ENCODE measurements at regions of chr13 and their contacts with region 1.

Region 1: GRCh38 chr13:32905063-32905863 is 111.0 kb upstream of the KL start:
- DNase-seq: no peak
- H3K4me3 Mint-ChIP-seq: peak overlapping the region; percentile 69
- H3K27ac Mint-ChIP-seq: peak overlapping the region; percentile 83
- H3K4me1 Mint-ChIP-seq: peaks cover 32% of the 10 kb centered on the region
- H3K27me3 Mint-ChIP-seq: peaks cover 4% of the 10 kb centered on the region

Region 2: GRCh38 chr13:31930901-31931522 is 974.3 kb before region 1 on chr13:
- intact Hi-C with region 1: loop called (anchors 5 kb)
- DNase-seq: peak; percentile 48
- H3K4me3 Mint-ChIP-seq: no peak overlapping the region
- H3K27ac Mint-ChIP-seq: no peak overlapping the region
- H3K4me1 Mint-ChIP-seq: peaks cover 17% of the 10 kb centered on the region
- H3K27me3 Mint-ChIP-seq: peaks cover 4% of the 10 kb centered on the region

Region 3: GRCh38 chr13:32586080-32586900 is 319.0 kb before region 1 on chr13 and contains the start of gene PDS5B:
- intact Hi-C with region 1: loop called (anchors 1 kb)
- DNase-seq: peak; percentile 93
- H3K4me3 Mint-ChIP-seq: peak within 1 kb of the TSS; percentile 95
- H3K27ac Mint-ChIP-seq: peak within 1 kb of the TSS; percentile 96
- H3K4me1 Mint-ChIP-seq: peaks cover 45% of the 10 kb centered on the region
- H3K27me3 Mint-ChIP-seq: peaks cover 16% of the 10 kb centered on the region
- total RNA-seq, gene PDS5B: 57.8 and 62.7 TPM in 2 replicates

Region 4: GRCh38 chr13:32838945-32839344 is 66.3 kb before region 1 on chr13:
- intact Hi-C with region 1: loop called (anchors 2 kb)
- DNase-seq: peak; percentile 14
- H3K4me3 Mint-ChIP-seq: no peak overlapping the region
- H3K27ac Mint-ChIP-seq: no peak overlapping the region
- H3K4me1 Mint-ChIP-seq: peaks cover 20% of the 10 kb centered on the region
- H3K27me3 Mint-ChIP-seq: no peaks in the 10 kb centered on the region

Region 5: DNA sequence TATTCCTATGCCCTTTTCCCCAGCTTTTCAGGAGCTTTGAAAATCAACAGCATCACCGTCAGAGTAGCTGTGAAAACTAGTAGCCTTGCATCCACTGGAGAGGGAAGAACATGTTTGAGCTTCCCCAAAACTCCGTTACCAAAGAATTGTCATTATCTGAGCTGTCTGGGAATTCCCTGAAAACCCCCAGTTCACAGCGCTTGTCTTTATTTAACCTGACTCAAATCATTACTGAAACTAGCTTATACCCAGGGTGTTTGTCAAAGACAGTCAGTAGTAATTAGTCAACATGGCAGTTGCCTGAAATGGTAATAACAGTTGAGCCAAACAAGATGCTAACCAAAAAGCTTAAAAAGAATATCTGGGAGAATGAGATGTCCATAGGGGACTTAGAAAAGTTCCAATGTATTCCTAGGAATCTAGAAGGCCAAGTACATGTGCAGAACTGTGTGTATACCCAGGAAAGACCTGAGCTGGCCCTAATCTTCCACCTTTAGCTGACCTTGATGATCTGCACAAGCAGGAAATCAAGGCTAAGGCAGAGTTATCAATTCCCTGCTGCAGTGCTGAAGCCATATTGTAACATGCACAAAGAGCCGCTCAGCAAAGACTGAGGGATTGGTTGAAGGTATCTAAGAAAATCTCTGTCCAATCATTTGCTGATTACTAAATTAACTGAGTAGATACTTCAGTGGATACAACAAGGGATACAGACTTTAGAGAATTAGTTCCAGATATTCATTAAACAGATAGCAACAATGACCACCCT is 241.8 kb after region 1 on chr13:
- intact Hi-C with region 1: loop called (anchors 5 kb)
- DNase-seq: peak; percentile 25
- H3K4me3 Mint-ChIP-seq: peak overlapping the region; percentile 20
- H3K27ac Mint-ChIP-seq: peak overlapping the region; percentile 81
- H3K4me1 Mint-ChIP-seq: peaks cover 41% of the 10 kb centered on the region
- H3K27me3 Mint-ChIP-seq: no peaks in the 10 kb centered on the region

Region 6: DNA sequence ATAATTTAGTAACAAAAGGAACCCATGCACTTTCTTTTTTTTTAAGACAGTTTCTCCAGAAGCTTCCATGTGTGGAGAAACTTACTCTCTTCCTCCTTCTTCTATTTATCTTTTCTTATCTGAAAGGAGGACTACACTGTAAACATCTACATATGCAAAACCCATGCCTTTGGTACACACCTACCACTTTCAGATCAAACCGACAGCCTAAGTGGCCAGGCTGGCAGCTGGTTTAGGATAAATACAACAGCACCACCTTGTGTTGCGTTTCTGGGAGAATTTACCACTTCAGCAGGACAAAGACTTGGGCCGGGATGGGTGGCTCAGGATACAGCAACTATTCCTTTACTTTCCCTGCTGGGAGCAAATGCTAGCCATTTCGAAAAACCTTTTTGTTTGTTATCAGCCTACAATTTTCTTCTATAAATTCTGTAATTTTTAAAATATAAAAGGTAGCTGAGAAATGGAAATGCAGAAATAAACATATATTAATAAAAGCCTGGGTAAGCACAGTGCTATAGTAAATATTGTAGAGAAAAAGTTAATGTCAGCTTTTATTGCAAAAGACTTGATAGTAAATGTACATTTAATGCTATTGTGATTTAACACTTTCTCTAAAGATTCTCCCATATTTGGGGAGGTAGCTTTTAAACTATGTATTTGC is 818.6 kb after region 1 on chr13:
- intact Hi-C with region 1: loop called (anchors 10 kb)
- DNase-seq: peak; percentile 51
- H3K4me3 Mint-ChIP-seq: no peak overlapping the region
- H3K27ac Mint-ChIP-seq: peak overlapping the region; percentile 84
- H3K4me1 Mint-ChIP-seq: peaks cover 49% of the 10 kb centered on the region
- H3K27me3 Mint-ChIP-seq: no peaks in the 10 kb centered on the region